ENCODE measurements at regions of chr22 and their contacts with region 1.

Region 1: DNA sequence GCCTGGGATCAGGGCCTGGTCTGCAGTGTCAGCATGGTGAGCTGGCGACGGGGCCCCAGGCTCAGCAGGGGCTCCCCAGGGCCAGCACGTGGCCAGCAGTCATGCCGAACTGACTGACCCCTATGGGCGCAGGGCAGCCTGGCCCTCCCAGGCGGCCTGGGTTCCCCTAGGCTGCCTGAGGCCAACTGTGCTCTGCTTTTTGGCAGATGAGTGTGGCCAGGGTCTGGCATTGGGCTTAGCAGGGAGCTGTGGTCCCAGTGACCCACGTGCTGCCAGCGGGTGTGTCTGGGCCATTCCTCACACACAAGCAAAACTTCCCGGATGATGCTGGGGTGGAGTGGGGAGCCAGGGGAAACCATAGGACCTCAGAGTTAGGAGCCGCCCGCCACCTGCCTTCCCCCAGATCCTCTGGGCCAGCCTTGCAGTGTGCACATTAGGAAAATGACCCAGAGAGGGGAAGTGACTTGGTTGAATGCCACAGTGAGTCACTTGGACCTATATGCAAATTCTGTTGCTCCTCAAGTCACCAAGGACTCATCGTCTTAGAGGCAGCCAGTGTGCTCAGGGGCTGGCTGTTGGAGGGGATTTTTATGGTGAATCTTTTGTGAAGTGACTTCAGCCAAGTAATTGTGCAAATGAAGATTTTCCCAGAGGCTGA is 6.5 kb downstream of the ADORA2A start:
- DNase-seq: peak; percentile 57
- ATAC-seq: peak; percentile 69
- H3K4me3 Mint-ChIP-seq: peak overlapping the region; percentile 78
- H3K27ac Mint-ChIP-seq: peak overlapping the region; percentile 99
- H3K4me1 Mint-ChIP-seq: peaks cover 98% of the 10 kb centered on the region
- H3K27me3 Mint-ChIP-seq: no peaks in the 10 kb centered on the region
- CTCF ChIP-seq: no peak

Region 2: GRCh38 chr22:23750714-23751440 is 683.1 kb before region 1 on chr22 and contains the start of gene ZNF70:
- CTCF ChIA-PET with region 1: no interaction called
- POLR2A ChIA-PET with region 1: no interaction called
- intact Hi-C with region 1: loop called (anchors 10 kb)
- DNase-seq: peak; percentile 90
- ATAC-seq: peak; percentile 58
- H3K4me3 Mint-ChIP-seq: peak within 1 kb of the TSS; percentile 87
- H3K27ac Mint-ChIP-seq: peak within 1 kb of the TSS; percentile 95
- H3K4me1 Mint-ChIP-seq: peaks cover 62% of the 10 kb centered on the region
- H3K27me3 Mint-ChIP-seq: no peaks in the 10 kb centered on the region
- CTCF ChIP-seq: no peak
- total RNA-seq, gene ZNF70: 4.0 and 4.9 TPM in 2 replicates

Region 3: GRCh38 chr22:24208012-24208749 is 225.8 kb before region 1 on chr22:
- CTCF ChIA-PET with region 1: no interaction called
- POLR2A ChIA-PET with region 1: no interaction called
- intact Hi-C with region 1: no loop called
- DNase-seq: no peak
- ATAC-seq: no peak
- H3K4me3 Mint-ChIP-seq: no peak overlapping the region
- H3K27ac Mint-ChIP-seq: peak overlapping the region; percentile 9
- H3K4me1 Mint-ChIP-seq: peaks cover 35% of the 10 kb centered on the region
- H3K27me3 Mint-ChIP-seq: no peaks in the 10 kb centered on the region
- CTCF ChIP-seq: no peak

Region 4: GRCh38 chr22:24270638-24271408 is 163.1 kb before region 1 on chr22 and contains the start of gene SPECC1L:
- CTCF ChIA-PET with region 1: no interaction called
- POLR2A ChIA-PET with region 1: no interaction called
- intact Hi-C with region 1: loop called (anchors 10 kb)
- DNase-seq: peak; percentile 96
- ATAC-seq: peak; percentile 90
- H3K4me3 Mint-ChIP-seq: peak within 1 kb of the TSS; percentile 90
- H3K27ac Mint-ChIP-seq: peak within 1 kb of the TSS; percentile 82
- H3K4me1 Mint-ChIP-seq: peaks cover 45% of the 10 kb centered on the region
- H3K27me3 Mint-ChIP-seq: no peaks in the 10 kb centered on the region
- CTCF ChIP-seq: no peak
- total RNA-seq, gene SPECC1L: 59.0 and 64.5 TPM in 2 replicates

Region 5: GRCh38 chr22:24391836-24392217 is 42.1 kb before region 1 on chr22:
- CTCF ChIA-PET with region 1: no interaction called
- POLR2A ChIA-PET with region 1: no interaction called
- intact Hi-C with region 1: no loop called
- DNase-seq: no peak
- ATAC-seq: no peak
- H3K4me3 Mint-ChIP-seq: no peak overlapping the region
- H3K27ac Mint-ChIP-seq: no peak overlapping the region
- H3K4me1 Mint-ChIP-seq: peaks cover 5% of the 10 kb centered on the region
- H3K27me3 Mint-ChIP-seq: no peaks in the 10 kb centered on the region
- CTCF ChIP-seq: no peak

Region 6: GRCh38 chr22:24423519-24424000 is 10.4 kb before region 1 on chr22:
- CTCF ChIA-PET with region 1: interaction called, 29 read pairs
- POLR2A ChIA-PET with region 1: interaction called, 154 read pairs
- intact Hi-C with region 1: loop called (anchors 1 kb)
- DNase-seq: peak; percentile 85
- ATAC-seq: peak; percentile 26
- H3K4me3 Mint-ChIP-seq: peak overlapping the region; percentile 68
- H3K27ac Mint-ChIP-seq: peak overlapping the region; percentile 24
- H3K4me1 Mint-ChIP-seq: peaks cover 47% of the 10 kb centered on the region
- H3K27me3 Mint-ChIP-seq: no peaks in the 10 kb centered on the region
- CTCF ChIP-seq: peak; percentile 24

Region 7: GRCh38 chr22:24503137-24503842 is 69.3 kb after region 1 on chr22:
- CTCF ChIA-PET with region 1: interaction called, 15 read pairs
- POLR2A ChIA-PET with region 1: interaction called, 16 read pairs
- intact Hi-C with region 1: loop called (anchors 1 kb)
- DNase-seq: peak; percentile 73
- ATAC-seq: peak; percentile 95
- H3K4me3 Mint-ChIP-seq: no peak overlapping the region
- H3K27ac Mint-ChIP-seq: peak overlapping the region; percentile 32
- H3K4me1 Mint-ChIP-seq: peaks cover 47% of the 10 kb centered on the region
- H3K27me3 Mint-ChIP-seq: no peaks in the 10 kb centered on the region
- CTCF ChIP-seq: peak; percentile 18

Region 8: DNA sequence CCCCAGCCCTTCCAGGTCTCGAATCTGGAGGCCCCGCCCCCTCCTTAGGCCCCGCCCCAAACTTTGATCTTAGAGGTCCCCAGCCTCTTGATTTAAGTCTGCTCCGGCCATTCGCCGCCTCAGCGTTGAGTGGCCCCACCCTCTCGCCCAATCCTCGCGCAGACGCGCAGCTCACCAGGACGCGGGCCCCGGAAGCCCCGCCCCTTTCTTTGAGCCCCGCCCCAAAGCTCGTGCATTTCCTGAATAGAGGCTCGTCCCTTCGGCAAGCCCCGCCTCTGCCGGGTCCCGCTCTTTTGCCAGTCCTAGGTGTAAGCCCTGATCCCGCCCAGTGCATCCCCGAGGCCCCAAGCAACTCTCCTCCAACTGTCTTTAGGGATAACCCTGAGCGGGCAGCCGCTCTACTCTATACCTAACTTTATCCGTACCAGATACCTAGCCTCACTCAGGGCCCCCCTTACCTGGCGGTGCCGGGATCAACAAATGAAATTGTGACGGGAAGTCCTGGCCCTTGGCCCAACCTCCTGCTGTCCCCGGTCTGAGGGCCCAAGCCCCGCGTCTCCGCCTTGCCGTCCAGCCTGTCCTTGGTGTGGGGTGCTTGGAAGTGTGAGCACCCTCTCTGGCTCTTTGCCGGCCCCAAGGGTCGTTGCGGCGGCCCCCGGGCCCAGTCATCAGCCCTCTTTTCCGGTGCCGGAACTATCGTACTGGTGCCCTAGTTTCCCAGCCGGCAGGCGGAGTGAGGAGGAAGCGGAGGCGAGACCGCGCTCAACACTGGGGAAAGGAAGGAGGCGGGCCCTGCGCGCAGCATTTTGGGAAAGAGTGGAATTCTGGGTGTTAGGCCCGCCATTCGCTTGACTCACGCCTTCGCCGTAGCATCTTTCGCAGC is 121.5 kb after region 1 on chr22 and contains the start of gene SNRPD3:
- CTCF ChIA-PET with region 1: no interaction called
- POLR2A ChIA-PET with region 1: interaction called, 36 read pairs
- intact Hi-C with region 1: loop called (anchors 1 kb)
- DNase-seq: peak; percentile 94
- ATAC-seq: peak; percentile 83
- H3K4me3 Mint-ChIP-seq: peak within 1 kb of the TSS; percentile 99
- H3K27ac Mint-ChIP-seq: peak within 1 kb of the TSS; percentile 96
- H3K4me1 Mint-ChIP-seq: peaks cover 85% of the 10 kb centered on the region
- H3K27me3 Mint-ChIP-seq: no peaks in the 10 kb centered on the region
- CTCF ChIP-seq: no peak
- total RNA-seq, gene SNRPD3: 96.5 and 98.6 TPM in 2 replicates

Measured in activated B cell treated with CpG ODN at 0.5 μM for 24 hours (primary cell).